ENCODE measurements at regions of chr20 and their contacts with region 1.

Region 1: GRCh38 chr20:14189794-14190402 is 147.5 kb downstream of the FLRT3 start:
- DNase-seq: peak; percentile 29
- H3K4me3 ChIP-seq: no peak overlapping the region
- H3K27ac ChIP-seq: no peak overlapping the region
- H3K4me1 ChIP-seq: no peaks in the 10 kb centered on the region
- H3K27me3 ChIP-seq: no peaks in the 10 kb centered on the region
- CTCF ChIP-seq: no peak

Region 2: DNA sequence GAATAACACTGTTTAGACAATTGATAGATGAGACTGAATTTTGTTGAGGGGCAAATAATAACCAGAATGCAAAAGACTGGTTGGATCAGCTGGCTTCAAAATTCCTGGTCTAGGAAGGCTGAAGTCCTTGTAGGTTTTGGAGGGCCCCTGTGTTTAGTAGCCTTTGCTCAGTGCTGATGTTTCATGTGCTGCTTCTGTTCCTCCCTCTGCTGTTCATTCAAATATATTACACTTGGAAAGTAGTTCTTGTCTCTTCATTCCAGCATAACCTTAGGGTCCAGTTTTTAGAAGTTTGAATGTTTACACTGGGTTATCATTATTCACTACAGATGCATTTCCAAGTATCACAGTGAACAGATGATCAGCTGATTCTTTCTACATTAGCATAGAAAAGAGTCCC is 75.0 kb after region 1 on chr20:
- intact Hi-C with region 1: loop called (anchors 2 kb)
- DNase-seq: no peak
- H3K4me3 ChIP-seq: no peak overlapping the region
- H3K27ac ChIP-seq: no peak overlapping the region
- H3K4me1 ChIP-seq: no peaks in the 10 kb centered on the region
- H3K27me3 ChIP-seq: no peaks in the 10 kb centered on the region
- CTCF ChIP-seq: peak; percentile 25

Region 3: GRCh38 chr20:15179381-15179780 is 989.5 kb after region 1 on chr20:
- intact Hi-C with region 1: no loop called
- DNase-seq: no peak
- H3K4me3 ChIP-seq: no peak overlapping the region
- H3K27ac ChIP-seq: no peak overlapping the region
- H3K4me1 ChIP-seq: no peaks in the 10 kb centered on the region
- H3K27me3 ChIP-seq: no peaks in the 10 kb centered on the region
- CTCF ChIP-seq: no peak

Measured in colonic mucosa (tissue), 4 donors.